ENCODE measurements at regions of chr1 and their contacts with region 1.

Region 1: DNA sequence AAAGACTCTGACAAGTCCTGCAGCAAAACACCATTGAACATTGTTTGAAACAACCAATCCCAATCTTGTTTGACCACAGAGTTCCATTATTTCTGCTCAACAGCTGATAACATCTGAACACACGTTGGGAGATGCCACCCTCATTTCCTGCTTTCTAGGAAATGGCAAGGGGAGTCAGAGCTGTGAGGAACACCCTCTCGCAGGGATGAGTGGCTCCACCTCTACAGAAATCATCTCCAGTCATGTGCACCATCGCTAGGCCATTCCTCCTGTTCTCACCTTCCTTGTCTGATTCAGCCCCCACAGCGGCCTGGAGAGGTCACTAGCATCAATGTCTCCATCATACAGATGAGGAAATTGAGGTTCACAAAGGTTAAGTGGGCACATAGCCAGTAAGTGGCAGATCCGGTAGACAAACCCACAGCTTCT is 22.4 kb upstream of the RUNX3 start:
- DNase-seq: no peak
- H3K4me3 ChIP-seq: no peak overlapping the region
- H3K27ac ChIP-seq: no peak overlapping the region
- H3K4me1 ChIP-seq: peaks cover 3 to 21% (median 12%) of the 10 kb centered on the region in 4 experiments; a peak in 6 of 7 replicates
- H3K27me3 ChIP-seq: no peaks in the 10 kb centered on the region
- CTCF ChIP-seq: 0 out of 4 replicates have a peak, but pooled peaks of 1 of the 3 experiments have one; percentile 11
- EP300 ChIP-seq: no peak
- POLR2A ChIP-seq: no peak
- RAD21 ChIP-seq: no peak; a peak in 1 of 4 replicates

Region 2: DNA sequence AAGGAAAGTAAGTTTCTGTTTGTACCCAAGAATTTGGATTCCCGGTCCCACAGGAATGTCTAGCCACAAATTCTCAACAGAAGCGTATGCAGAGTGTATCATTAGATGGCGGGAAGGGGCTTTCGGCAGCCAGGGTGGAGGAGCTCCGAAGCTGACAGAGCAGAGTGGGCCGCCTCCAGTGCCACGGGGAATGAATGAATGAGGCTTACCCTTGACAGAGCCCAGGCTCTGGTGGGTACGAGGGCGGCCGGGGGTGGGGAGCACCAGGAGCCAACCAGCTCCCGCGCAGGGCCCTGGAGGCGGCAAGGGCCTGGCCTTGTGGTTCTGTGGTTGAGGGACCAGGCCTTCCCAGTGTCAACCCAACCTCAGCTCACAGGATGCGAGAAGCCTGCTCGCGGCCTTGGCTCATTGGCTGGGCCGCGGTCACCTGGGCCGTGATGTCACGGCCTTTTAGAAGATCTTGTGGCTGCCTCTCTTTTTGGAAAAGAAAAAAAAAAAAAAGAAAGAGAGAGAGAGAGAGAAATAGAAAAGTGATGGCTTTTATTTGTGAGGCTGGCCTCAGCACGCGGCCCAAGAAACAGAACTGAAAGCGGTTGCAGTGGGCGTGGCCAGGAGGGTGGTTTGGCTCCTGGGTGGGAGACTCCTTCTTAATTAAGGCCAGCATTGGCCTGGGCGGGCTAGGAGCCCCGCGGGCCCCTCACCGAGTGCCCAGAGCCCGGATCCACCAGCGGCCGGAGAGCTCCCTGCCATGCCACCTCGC is 12.6 kb after region 1 on chr1:
- CTCF ChIA-PET with region 1: interaction called, 14 read pairs
- POLR2A ChIA-PET with region 1: no interaction called
- DNase-seq: no peak
- H3K4me3 ChIP-seq: no peak overlapping the region
- H3K27ac ChIP-seq: no peak overlapping the region
- H3K4me1 ChIP-seq: peaks cover 0 to 5% (median under 1%) of the 10 kb centered on the region in 4 experiments; a peak in 3 of 7 replicates
- H3K27me3 ChIP-seq: no peaks in the 10 kb centered on the region
- CTCF ChIP-seq: no peak
- EP300 ChIP-seq: no peak
- POLR2A ChIP-seq: no peak
- RAD21 ChIP-seq: no peak